Posterior vena cava (tissue), 2 donors: ENCODE measurements at regions of chr3 and their contacts with region 1.

Region 1: GRCh38 chr3:114043205-114043604 is 13.1 kb downstream of the CCDC191 start:
- DNase-seq: no peak

Region 2: GRCh38 chr3:114079761-114080160 is 36.6 kb after region 1 on chr3:
- intact Hi-C with region 1: no loop called
- DNase-seq: no peak

Region 3: DNA sequence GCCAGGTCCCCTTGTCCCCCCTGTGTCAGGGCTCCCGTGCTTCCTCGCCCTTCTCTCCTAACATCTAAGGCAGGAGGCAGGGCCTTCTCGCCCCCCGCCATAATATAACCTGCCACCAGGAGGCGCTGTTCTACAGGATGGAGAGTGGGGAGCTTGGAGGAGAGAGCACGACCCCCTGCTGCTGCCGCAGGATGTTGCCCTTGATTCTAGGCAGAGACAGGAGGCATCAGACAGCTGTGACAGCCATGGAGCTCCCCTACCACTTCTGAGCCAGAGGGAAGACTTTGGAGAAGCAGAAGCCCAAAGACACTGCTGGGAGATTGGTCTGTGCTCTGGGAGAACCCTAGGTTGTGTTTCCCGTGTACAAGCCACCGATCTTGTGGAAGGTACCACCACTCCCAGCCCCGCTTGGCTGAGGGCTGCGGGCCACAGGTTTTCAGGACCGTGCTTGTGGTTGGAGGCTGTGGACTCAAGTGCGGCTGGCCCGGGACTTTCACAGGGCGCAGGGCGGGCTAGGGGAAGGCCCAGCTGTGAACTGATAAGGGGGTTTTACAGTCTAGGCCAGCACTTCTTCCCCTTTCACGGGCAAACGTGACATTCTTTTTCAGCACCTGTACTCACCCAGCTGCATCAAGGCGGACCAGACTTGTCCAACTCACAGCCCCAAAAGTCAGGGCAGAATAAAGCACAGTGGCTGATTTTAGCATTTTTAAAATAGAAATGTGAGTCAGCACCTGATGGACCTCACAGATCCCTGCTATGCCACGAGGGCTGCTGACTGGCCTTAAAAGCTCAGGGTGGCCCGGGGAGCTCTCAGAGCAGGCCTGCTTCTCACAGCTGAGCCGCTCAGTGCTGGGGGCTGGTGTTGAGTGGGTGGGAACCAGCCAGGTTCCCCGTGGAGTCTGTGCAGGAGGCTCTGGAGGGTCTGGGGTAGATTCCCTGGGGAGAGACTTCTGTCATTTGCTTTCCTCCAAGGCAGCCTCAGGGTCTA is 248.0 kb after region 1 on chr3:
- intact Hi-C with region 1: no loop called
- DNase-seq: peak; percentile 85

Region 4: DNA sequence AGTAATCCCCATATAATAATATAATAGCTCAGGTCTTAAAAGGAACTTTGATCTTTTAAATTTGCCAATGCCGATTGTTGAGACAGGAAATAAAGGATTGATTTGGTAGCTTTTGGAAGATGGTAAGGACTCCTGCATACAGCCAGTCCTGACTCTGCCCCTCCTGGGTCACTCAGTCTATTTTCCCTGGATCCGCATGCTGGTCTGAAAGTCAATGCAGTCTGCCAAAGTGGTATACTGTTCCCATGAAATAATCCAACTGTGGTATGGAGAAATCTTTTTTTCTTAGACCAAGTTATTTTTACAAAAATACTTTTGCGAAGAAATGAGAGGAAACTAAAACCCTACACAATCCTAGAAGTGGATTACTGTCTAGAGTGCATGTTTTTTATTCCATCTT is 441.7 kb after region 1 on chr3:
- intact Hi-C with region 1: no loop called
- DNase-seq: no peak

Region 5: DNA sequence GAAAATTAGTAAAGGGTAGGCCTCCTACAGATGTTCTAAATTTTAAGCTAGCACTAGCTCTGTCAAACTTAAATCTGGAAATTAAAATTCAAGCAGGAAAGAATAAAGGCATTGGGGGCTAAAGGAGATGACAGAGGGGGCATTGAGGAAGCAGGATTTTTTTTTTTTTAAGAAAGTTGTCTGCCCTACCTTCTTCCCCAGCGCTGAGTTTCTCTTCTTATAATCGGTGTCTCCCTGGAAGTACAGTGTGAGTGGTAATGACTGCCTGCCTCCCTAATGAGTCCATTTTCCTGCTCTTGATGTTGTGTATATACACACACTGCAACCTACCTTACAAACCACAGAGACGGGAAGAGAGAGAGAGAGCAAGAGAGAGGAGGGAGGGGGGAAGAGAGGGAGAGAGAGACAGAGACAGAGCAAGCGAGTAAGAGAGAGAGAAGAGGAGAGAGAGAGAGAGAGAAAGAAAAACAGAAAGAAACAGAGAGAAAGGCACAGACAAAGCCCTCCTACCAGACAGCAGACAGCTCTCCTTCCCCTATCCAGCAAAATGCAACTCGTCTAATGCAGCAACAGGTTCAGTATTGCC is 1056.9 kb after region 1 on chr3:
- intact Hi-C with region 1: loop called in 1 of 2 experiments (anchors 5 kb)
- DNase-seq: no peak